CD8-positive, alpha-beta T cell (primary cell): ENCODE measurements at regions of chr1 and their contacts with region 1.

Region 1: GRCh38 chr1:92310185-92310597 is 11.3 kb downstream of the RPAP2 start:
- DNase-seq: peak in 2 of 9 experiments; percentile 52 to 66
- ATAC-seq: peak; percentile 61
- H3K4me3 ChIP-seq: no peak overlapping the region
- H3K4me3 Mint-ChIP-seq: no peak overlapping the region
- H3K27ac ChIP-seq: no peak overlapping the region
- H3K27ac Mint-ChIP-seq: no peak overlapping the region
- H3K4me1 ChIP-seq: peaks cover 18% of the 10 kb centered on the region
- H3K4me1 Mint-ChIP-seq: peaks cover 39% of the 10 kb centered on the region
- H3K27me3 ChIP-seq: no peaks in the 10 kb centered on the region
- H3K27me3 Mint-ChIP-seq: no peaks in the 10 kb centered on the region
- CTCF ChIP-seq: peak; percentile 75

Region 2: DNA sequence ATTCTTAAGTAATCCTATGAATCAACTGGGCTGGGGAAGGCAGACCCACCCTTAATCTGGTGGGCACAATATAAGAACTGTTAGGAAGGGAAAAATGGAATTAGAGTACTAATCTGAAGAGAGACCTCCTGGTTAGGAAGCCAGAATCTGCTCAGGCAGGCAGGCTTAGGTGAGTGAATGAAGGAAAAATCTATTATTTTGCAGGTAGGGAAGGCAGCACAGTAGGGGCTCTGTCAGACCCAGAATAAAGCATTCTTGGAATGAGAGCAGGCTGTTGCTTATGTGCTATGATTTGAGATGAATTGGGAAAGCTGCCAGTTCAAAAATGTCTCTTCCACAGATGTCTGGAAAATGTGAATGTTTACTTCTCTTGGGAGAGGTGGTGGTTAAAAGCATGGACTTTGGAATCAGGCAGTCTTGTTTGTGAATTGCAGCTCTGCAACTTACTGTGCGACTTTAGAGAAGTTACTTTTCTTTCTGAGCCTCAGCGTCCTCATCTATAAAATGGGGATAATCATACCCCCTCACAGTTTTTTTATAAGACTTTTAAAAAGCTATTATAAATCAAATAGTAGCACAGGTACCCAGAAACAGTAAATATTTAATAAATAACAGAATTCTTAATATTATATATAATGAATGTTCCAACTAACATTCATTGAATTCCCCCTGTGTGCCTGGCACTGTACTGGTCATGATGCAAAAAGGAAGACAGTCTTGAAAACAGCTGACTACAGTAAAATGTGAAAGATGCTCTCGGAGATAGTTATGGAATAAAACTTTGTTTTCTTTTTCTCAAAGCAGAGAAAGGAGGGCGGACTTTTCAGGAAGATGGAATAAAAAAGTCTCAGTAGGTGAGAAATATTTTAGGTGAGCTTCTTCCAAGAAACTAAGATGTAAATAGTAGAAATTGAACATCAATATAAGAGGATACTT is 1273.0 kb before region 1 on chr1:
- CTCF ChIA-PET with region 1: no interaction called
- POLR2A ChIA-PET with region 1: no interaction called
- intact Hi-C with region 1: no loop called
- DNase-seq: no peak
- ATAC-seq: no peak
- H3K4me3 ChIP-seq: no peak overlapping the region
- H3K4me3 Mint-ChIP-seq: no peak overlapping the region
- H3K27ac ChIP-seq: no peak overlapping the region
- H3K27ac Mint-ChIP-seq: no peak overlapping the region
- H3K4me1 ChIP-seq: no peaks in the 10 kb centered on the region
- H3K4me1 Mint-ChIP-seq: no peaks in the 10 kb centered on the region
- H3K27me3 ChIP-seq: no peaks in the 10 kb centered on the region
- H3K27me3 Mint-ChIP-seq: peaks cover 6% of the 10 kb centered on the region
- CTCF ChIP-seq: no peak

Region 3: DNA sequence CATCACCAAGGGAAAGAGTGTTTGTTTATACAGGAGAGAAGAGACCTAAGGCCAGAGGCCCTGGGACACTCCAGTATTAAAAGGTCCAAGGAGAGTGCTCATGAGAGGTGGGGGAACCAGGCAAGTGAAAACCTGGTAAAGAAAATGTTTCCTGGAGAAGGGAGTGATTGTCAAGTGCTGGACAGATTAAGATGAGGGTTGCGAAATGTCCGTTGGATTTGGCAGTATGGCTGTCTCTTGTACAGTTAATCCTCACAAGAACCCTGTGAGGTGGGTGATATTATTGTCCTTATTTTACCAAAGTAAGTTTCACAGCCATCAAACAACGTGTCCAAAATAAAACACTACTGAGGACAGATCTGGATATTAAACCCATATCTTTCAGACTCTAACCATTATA is 32.9 kb after region 1 on chr1:
- CTCF ChIA-PET with region 1: interaction called, 3 read pairs
- POLR2A ChIA-PET with region 1: no interaction called
- intact Hi-C with region 1: loop called in 1 of 2 experiments (anchors 5 kb)
- DNase-seq: no peak
- ATAC-seq: no peak
- H3K4me3 ChIP-seq: no peak overlapping the region
- H3K4me3 Mint-ChIP-seq: no peak overlapping the region
- H3K27ac ChIP-seq: no peak overlapping the region
- H3K27ac Mint-ChIP-seq: no peak overlapping the region
- H3K4me1 ChIP-seq: no peaks in the 10 kb centered on the region
- H3K4me1 Mint-ChIP-seq: peaks cover under 1% of the 10 kb centered on the region
- H3K27me3 ChIP-seq: no peaks in the 10 kb centered on the region
- H3K27me3 Mint-ChIP-seq: no peaks in the 10 kb centered on the region
- CTCF ChIP-seq: no peak

Region 4: GRCh38 chr1:92536980-92537884 is 227.0 kb after region 1 on chr1:
- CTCF ChIA-PET with region 1: no interaction called
- POLR2A ChIA-PET with region 1: no interaction called
- intact Hi-C with region 1: loop called in 1 of 2 experiments (anchors 5 kb)
- DNase-seq: peak in 3 of 9 experiments; percentile 22 to 86 (median 76)
- ATAC-seq: peak; percentile 78
- H3K4me3 ChIP-seq: peak overlapping the region in 1 of 2 experiments; percentile 9
- H3K4me3 Mint-ChIP-seq: peak overlapping the region; percentile 56
- H3K27ac ChIP-seq: peak overlapping the region; percentile 12 to 83
- H3K27ac Mint-ChIP-seq: peak overlapping the region; percentile 89
- H3K4me1 ChIP-seq: peaks cover 27% of the 10 kb centered on the region
- H3K4me1 Mint-ChIP-seq: peaks cover 60% of the 10 kb centered on the region
- H3K27me3 ChIP-seq: no peaks in the 10 kb centered on the region
- H3K27me3 Mint-ChIP-seq: no peaks in the 10 kb centered on the region
- CTCF ChIP-seq: no peak

Region 5: DNA sequence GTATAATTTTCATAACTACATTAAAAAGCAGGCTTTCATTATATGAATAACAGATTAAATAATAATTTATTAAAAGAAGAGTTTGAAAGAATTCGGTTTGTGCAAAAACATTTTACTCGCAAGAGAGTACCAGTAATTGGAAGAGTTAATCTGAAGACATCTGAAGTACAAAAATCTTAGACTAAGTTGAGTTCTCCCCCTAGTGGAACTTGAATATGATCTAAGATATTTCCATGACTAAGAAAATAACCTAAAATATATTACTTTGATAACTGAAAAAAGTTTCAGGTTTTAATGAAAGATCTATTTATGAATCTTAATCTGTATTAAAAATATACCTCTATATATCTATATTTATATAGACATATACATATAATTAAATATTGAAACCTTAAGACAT is 289.0 kb after region 1 on chr1:
- CTCF ChIA-PET with region 1: interaction called, 8 read pairs
- POLR2A ChIA-PET with region 1: interaction called, 3 read pairs
- intact Hi-C with region 1: loop called (anchors 1 kb)
- DNase-seq: peak in 2 of 9 experiments; percentile 55 to 70
- ATAC-seq: peak; percentile 59
- H3K4me3 ChIP-seq: no peak overlapping the region
- H3K4me3 Mint-ChIP-seq: no peak overlapping the region
- H3K27ac ChIP-seq: no peak overlapping the region
- H3K27ac Mint-ChIP-seq: no peak overlapping the region
- H3K4me1 ChIP-seq: no peaks in the 10 kb centered on the region
- H3K4me1 Mint-ChIP-seq: peaks cover 2% of the 10 kb centered on the region
- H3K27me3 ChIP-seq: no peaks in the 10 kb centered on the region
- H3K27me3 Mint-ChIP-seq: no peaks in the 10 kb centered on the region
- CTCF ChIP-seq: peak; percentile 91

Region 6: DNA sequence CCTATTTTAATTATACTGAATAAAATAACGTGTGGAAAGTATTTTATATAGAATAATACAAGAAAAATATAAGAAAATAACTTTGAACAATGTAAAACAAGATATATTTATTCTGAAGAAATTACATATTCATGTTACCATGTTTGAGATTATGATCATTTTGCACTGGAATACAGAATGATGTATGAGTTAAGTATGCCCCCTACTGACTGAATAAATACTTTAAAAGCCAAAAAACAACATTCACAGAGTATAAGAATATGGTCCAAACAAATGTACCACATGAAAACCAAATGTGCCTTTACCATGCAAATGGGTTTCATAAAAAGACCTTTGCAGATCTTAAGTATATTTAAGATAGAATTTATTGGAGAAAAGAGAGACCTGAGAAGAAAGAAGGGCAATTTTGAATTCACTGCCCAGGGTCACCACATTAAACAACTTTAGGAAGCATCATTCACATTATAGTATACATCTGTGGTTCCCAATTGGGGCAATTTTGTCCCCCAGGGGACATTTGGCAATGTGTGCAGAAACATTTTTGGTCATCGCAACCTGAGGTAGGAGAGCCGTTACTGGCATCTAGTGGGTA is 313.1 kb after region 1 on chr1:
- CTCF ChIA-PET with region 1: interaction called, 9 read pairs
- POLR2A ChIA-PET with region 1: interaction called, 3 read pairs
- intact Hi-C with region 1: loop called (anchors 1 kb)
- DNase-seq: peak in 2 of 9 experiments; percentile 39 to 57
- ATAC-seq: no peak
- H3K4me3 ChIP-seq: no peak overlapping the region
- H3K4me3 Mint-ChIP-seq: no peak overlapping the region
- H3K27ac ChIP-seq: no peak overlapping the region
- H3K27ac Mint-ChIP-seq: no peak overlapping the region
- H3K4me1 ChIP-seq: no peaks in the 10 kb centered on the region
- H3K4me1 Mint-ChIP-seq: no peaks in the 10 kb centered on the region
- H3K27me3 ChIP-seq: no peaks in the 10 kb centered on the region
- H3K27me3 Mint-ChIP-seq: no peaks in the 10 kb centered on the region
- CTCF ChIP-seq: peak; percentile 81